HEK293 (cell line): ENCODE measurements at regions of chr15 and their contacts with region 1.

Region 1: DNA sequence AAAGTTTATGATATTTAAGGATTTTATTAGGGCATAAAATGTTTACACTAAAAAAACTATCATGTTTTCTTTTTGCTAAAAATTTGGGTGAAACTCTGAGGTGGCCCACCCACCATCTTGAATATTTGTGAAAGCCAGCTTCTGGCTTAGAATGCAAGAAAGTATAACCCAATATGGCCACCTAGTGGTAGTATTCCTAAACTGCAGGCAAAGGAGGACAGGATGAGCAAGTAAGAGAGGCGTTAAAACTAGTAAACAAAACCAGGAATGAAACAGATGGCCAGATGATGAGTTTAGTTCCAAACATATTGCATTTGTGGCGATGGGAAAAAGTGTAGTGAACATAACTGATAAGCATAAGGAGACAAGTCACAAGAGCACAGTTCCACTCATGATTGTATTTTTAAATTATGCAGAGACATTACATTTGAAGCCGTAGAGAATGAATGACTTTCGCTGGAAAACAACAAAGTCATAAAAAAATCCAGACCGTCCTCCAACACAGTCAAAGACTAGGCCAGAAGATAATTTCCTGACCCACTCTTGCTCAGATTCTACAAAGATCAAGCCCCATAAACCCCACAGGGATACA is 103.3 kb upstream of the PRTG start:
- H3K4me3 ChIP-seq: no peak overlapping the region
- H3K27ac ChIP-seq: no peak overlapping the region
- H3K4me1 ChIP-seq: no peaks in the 10 kb centered on the region
- CTCF ChIP-seq: 0 out of 2 replicates have a peak, but pooled peaks have one; percentile 10

Region 2: DNA sequence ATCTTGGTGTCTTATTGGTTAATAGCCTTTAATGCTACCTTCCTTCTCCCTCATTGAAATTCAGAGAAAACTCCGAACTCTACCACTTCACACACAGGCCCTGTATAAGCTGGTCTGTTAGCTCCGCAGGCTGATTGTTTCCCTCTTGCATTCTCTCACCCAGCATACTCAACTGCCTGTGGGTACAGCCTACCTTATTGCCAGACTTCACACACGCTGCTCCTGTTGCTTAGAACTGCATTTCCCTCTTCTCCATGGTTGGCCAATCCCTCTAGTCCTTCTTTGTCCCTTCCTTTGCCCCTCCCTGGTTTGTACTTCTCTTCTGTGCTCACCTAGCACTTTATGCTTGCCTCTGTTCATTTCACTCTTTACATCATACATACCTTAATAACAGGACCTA is 10.3 kb before region 1 on chr15:
- CTCF ChIA-PET with region 1: interaction called, 11 read pairs
- POLR2A ChIA-PET with region 1: no interaction called
- H3K4me3 ChIP-seq: no peak overlapping the region
- H3K27ac ChIP-seq: no peak overlapping the region
- H3K4me1 ChIP-seq: no peaks in the 10 kb centered on the region
- CTCF ChIP-seq: no peak

Region 3: GRCh38 chr15:55858661-55859060 is 12.4 kb after region 1 on chr15:
- CTCF ChIA-PET with region 1: no interaction called
- POLR2A ChIA-PET with region 1: no interaction called
- H3K4me3 ChIP-seq: no peak overlapping the region
- H3K27ac ChIP-seq: no peak overlapping the region
- H3K4me1 ChIP-seq: no peaks in the 10 kb centered on the region
- CTCF ChIP-seq: no peak